ENCODE measurements at regions of chr20 and their contacts with region 1.

Region 1: DNA sequence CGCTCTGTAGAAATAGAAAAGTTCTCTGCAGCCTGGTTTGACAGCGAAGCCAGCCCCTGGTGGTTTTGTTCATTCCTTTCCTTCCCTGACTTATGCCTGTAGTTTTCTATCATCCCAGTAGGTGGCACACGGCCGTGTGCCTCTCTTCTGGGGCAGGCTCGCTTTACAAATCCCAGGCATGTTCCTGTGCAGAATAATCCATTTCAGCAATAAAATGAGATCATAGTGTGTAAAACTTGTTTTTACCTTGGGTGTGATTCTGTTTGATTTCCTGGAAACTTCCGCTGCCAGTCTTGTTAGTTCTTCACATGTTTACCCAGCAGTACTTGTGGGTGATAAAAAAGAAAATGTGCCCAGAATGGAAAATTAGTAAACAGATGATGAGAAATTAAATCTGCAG is 7.4 kb upstream of the INSM1 start:
- DNase-seq: no peak
- H3K4me3 ChIP-seq: no peak overlapping the region
- H3K27ac ChIP-seq: no peak overlapping the region
- H3K4me1 ChIP-seq: no peaks in the 10 kb centered on the region
- H3K27me3 ChIP-seq: no peaks in the 10 kb centered on the region
- CTCF ChIP-seq: peak in 1 of 3 donors; percentile 27
- EP300 ChIP-seq: no peak
- POLR2A ChIP-seq: no peak

Region 2: GRCh38 chr20:19327401-19327800 is 1033.1 kb before region 1 on chr20:
- intact Hi-C with region 1: no loop called
- DNase-seq: no peak
- H3K4me3 ChIP-seq: no peak overlapping the region
- H3K27ac ChIP-seq: no peak overlapping the region
- H3K4me1 ChIP-seq: no peaks in the 10 kb centered on the region
- H3K27me3 ChIP-seq: no peaks in the 10 kb centered on the region
- CTCF ChIP-seq: no peak
- EP300 ChIP-seq: no peak
- POLR2A ChIP-seq: no peak

Region 3: GRCh38 chr20:20571068-20571780 is 210.8 kb after region 1 on chr20:
- intact Hi-C with region 1: loop called in 1 of 4 experiments (anchors 10 kb)
- DNase-seq: no peak
- H3K4me3 ChIP-seq: no peak overlapping the region
- H3K27ac ChIP-seq: no peak overlapping the region
- H3K4me1 ChIP-seq: no peaks in the 10 kb centered on the region
- H3K27me3 ChIP-seq: no peaks in the 10 kb centered on the region
- CTCF ChIP-seq: no peak
- EP300 ChIP-seq: no peak
- POLR2A ChIP-seq: no peak

Region 4: DNA sequence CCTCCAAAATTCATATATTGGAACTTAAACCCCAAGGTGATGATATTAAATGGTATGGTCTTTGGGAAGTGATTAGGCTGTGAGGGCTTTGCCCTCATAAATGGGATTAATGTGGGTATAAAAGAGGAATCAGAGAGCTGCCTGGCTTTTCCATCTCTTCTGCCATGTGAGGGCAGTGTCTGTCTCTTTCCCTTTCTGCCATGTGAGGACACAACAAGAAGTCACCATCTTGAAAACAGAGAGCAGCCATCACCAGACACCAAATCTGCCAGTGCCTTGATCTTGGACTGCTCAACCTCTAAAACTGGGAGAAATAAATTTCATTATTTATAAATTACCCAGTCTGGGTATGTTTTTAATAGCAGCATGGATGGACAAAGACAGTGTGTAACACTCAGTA is 1608.0 kb after region 1 on chr20:
- intact Hi-C with region 1: no loop called
- DNase-seq: no peak
- H3K4me3 ChIP-seq: no peak overlapping the region
- H3K27ac ChIP-seq: no peak overlapping the region
- H3K4me1 ChIP-seq: no peaks in the 10 kb centered on the region
- H3K27me3 ChIP-seq: no peaks in the 10 kb centered on the region
- CTCF ChIP-seq: no peak
- EP300 ChIP-seq: no peak
- POLR2A ChIP-seq: no peak

Measured in ovary (tissue), 10 donors.